Tibial artery (tissue), 4 donors: ENCODE measurements at regions of chr5 and their contacts with region 1.

Region 1: GRCh38 chr5:102767862-102768261 is 12.8 kb downstream of the PAM start:
- DNase-seq: no peak
- H3K4me3 ChIP-seq: no peak overlapping the region
- H3K27ac ChIP-seq: no peak overlapping the region
- H3K4me1 ChIP-seq: peaks cover 0 to 45% (median 13%) of the 10 kb centered on the region in 4 donors
- H3K27me3 ChIP-seq: no peaks in the 10 kb centered on the region
- CTCF ChIP-seq: no peak

Region 2: GRCh38 chr5:102241809-102242421 is 525.9 kb before region 1 on chr5:
- intact Hi-C with region 1: no loop called
- DNase-seq: no peak
- H3K4me3 ChIP-seq: no peak overlapping the region
- H3K27ac ChIP-seq: no peak overlapping the region
- H3K4me1 ChIP-seq: no peaks in the 10 kb centered on the region
- H3K27me3 ChIP-seq: no peaks in the 10 kb centered on the region
- CTCF ChIP-seq: no peak

Region 3: DNA sequence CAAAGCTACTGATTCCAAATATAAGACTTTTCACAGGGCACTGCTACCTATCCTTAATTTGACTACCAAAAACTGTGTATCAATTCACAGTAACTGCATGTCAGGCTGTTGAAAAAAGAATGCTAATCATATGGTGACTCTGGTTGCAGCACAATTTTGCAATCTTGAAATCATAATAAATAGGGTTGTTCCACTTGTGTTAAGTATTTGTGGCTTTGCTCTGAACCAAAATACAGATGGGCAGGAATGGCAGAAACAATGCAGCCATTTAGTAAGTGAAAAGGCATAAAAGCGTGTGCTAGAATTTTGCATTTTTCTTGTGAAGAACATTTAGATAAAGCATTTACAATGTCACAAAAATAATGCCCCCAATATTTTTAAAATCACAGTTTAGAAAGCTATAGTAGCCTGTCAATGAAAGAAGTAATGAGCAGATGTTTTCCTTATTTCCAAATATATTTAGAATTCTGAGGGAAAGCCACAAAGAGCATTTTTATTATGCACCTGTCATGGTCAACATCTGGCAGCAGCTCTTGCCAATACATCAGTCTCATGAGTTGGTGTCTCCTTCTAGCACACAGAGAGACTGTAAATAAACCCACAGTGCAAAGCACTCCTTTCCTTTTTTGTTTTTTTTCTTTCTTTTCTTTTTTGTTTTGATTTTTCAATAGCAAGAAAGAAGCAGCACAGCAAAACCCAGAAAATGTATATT is 67.6 kb before region 1 on chr5:
- intact Hi-C with region 1: loop called (anchors 2 kb)
- DNase-seq: no peak
- H3K4me3 ChIP-seq: no peak overlapping the region
- H3K27ac ChIP-seq: no peak overlapping the region
- H3K4me1 ChIP-seq: no peaks in the 10 kb centered on the region
- H3K27me3 ChIP-seq: no peaks in the 10 kb centered on the region
- CTCF ChIP-seq: no peak